ENCODE measurements at regions of chr12 and their contacts with region 1.

Region 1: DNA sequence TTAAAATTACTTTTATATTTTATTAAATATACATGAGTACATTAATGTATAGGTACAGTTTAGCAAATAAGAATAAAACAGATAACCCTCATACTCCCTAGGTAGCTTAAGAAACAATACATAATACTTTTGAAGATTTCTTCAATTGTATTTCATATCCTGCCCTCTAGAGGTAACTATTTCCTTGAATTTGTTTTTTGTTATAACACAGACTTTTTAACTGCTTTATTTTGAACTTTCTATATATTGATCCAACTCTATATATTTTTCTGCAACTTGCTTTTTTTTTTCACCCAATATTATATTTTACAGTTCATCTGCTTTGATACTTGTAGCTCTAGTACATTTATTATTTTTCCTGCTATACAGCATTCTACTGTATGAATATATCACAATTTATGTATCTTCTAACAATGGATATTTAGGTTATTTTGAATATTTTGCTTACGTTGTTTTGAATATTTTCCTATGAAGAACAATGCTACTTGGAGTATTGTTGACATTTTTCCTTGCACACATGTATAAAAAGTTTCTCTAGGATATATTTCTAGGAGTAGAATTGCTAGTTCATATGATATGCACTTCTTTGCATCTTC is 72.8 kb upstream of the ABCD2 start:
- DNase-seq: peak; percentile 0
- ATAC-seq: no peak
- H3K4me3 ChIP-seq: no peak overlapping the region
- H3K27ac ChIP-seq: no peak overlapping the region
- H3K4me1 ChIP-seq: no peaks in the 10 kb centered on the region
- H3K27me3 ChIP-seq: no peaks in the 10 kb centered on the region
- CTCF ChIP-seq: peak in 2 of 3 experiments; percentile 29 to 55; a peak in 4 of 6 replicates
- POLR2A ChIP-seq: no peak
- RAD21 ChIP-seq: peak; percentile 48

Region 2: DNA sequence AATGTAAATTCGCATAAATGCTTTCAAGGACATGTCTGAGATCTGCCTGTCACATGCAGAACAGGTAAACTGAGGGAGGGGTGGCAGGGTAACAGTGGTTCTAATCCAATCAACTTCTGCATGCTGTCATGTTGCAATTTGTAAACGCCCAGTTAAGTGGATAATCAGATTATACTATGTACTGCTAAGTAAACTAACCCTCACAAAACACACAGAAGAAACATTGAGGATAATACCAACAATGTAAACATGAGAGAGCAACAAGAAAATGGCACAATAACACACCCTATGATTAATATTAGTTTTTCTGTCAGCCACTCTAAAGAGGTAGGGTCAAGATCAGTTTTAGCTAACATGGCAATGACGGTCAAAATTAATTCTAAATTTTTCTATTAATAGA is 373.2 kb before region 1 on chr12:
- CTCF ChIA-PET with region 1: no interaction called
- POLR2A ChIA-PET with region 1: no interaction called
- RAD21 ChIA-PET with region 1: no interaction called
- intact Hi-C with region 1: loop called (anchors 10 kb)
- DNase-seq: no peak
- ATAC-seq: no peak
- H3K4me3 ChIP-seq: no peak overlapping the region
- H3K27ac ChIP-seq: no peak overlapping the region
- H3K4me1 ChIP-seq: no peaks in the 10 kb centered on the region
- H3K27me3 ChIP-seq: no peaks in the 10 kb centered on the region
- CTCF ChIP-seq: no peak
- POLR2A ChIP-seq: no peak
- RAD21 ChIP-seq: no peak

Region 3: DNA sequence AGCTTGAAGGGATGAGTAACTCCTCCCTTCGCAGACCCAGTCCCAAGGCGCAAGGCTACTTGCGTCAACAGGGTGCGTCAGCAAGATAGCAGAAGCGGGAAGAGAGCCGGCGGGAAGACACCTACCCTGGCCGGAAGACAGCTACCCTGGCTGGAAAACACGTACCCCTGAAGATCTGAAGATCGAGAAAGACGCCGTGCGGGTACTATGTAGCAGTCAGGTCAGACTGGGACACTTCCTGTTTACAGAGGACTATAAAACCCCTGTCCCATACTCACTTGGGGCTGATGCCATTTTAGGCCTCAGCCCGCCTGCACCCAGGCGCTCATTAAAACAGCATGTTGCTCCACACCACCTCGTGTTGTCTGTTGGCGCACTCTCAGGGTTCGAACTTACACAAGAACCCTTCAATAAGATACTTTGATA is 153.7 kb before region 1 on chr12:
- CTCF ChIA-PET with region 1: no interaction called
- POLR2A ChIA-PET with region 1: no interaction called
- RAD21 ChIA-PET with region 1: no interaction called
- intact Hi-C with region 1: loop called (anchors 10 kb)
- DNase-seq: no peak
- ATAC-seq: no peak
- H3K4me3 ChIP-seq: no peak overlapping the region
- H3K27ac ChIP-seq: no peak overlapping the region
- H3K4me1 ChIP-seq: no peaks in the 10 kb centered on the region
- H3K27me3 ChIP-seq: no peaks in the 10 kb centered on the region
- CTCF ChIP-seq: no peak
- POLR2A ChIP-seq: no peak
- RAD21 ChIP-seq: no peak

Region 4: DNA sequence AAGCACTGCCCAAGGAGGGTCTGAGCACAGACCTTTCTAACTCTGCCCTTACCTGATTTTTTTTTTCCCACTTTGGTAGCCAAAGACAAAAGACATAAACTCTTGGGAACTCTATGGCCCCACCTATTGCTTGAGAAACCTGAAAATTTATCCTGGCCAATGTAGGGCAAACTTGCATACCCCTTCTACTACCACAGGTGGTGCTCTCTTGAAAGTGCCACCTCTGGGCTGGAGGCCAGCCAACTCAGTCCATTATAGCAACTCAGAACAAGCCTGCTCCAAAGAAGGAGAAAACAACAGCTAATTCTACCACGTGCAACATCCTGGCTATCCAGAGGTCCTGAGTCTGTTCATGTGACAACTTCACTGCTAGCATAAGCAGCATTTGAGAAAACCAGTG is 17.1 kb before region 1 on chr12:
- CTCF ChIA-PET with region 1: no interaction called
- POLR2A ChIA-PET with region 1: no interaction called
- RAD21 ChIA-PET with region 1: no interaction called
- intact Hi-C with region 1: no loop called
- DNase-seq: peak; percentile 1
- ATAC-seq: peak; percentile 69
- H3K4me3 ChIP-seq: no peak overlapping the region
- H3K27ac ChIP-seq: no peak overlapping the region
- H3K4me1 ChIP-seq: no peaks in the 10 kb centered on the region
- H3K27me3 ChIP-seq: no peaks in the 10 kb centered on the region
- CTCF ChIP-seq: peak in 2 of 3 experiments; percentile 33; a peak in 2 of 6 replicates
- POLR2A ChIP-seq: no peak
- RAD21 ChIP-seq: no peak

Region 5: GRCh38 chr12:39712334-39712733 is 20.0 kb after region 1 on chr12:
- CTCF ChIA-PET with region 1: no interaction called
- POLR2A ChIA-PET with region 1: no interaction called
- RAD21 ChIA-PET with region 1: no interaction called
- intact Hi-C with region 1: no loop called
- DNase-seq: no peak
- ATAC-seq: no peak
- H3K4me3 ChIP-seq: no peak overlapping the region
- H3K27ac ChIP-seq: no peak overlapping the region
- H3K4me1 ChIP-seq: no peaks in the 10 kb centered on the region
- H3K27me3 ChIP-seq: no peaks in the 10 kb centered on the region
- CTCF ChIP-seq: no peak
- POLR2A ChIP-seq: no peak
- RAD21 ChIP-seq: no peak

Measured in HCT116 (cell line).